CD4-positive, alpha-beta T cell (primary cell): ENCODE measurements at regions of chr1 and their contacts with region 1.

Region 1: GRCh38 chr1:161749509-161750407 is at the start of gene DUSP12:
- DNase-seq: peak; percentile 75 to 94 (median 82)
- ATAC-seq: peak; percentile 96
- H3K4me3 ChIP-seq: peak within 1 kb of the TSS; percentile 95
- H3K4me3 Mint-ChIP-seq: peak within 1 kb of the TSS; percentile 99
- H3K27ac ChIP-seq: peak within 1 kb of the TSS; percentile 70 to 73
- H3K27ac Mint-ChIP-seq: peak within 1 kb of the TSS; percentile 91
- H3K4me1 ChIP-seq: peaks cover 20% of the 10 kb centered on the region
- H3K4me1 Mint-ChIP-seq: peaks cover 43% of the 10 kb centered on the region
- H3K27me3 ChIP-seq: no peaks in the 10 kb centered on the region
- H3K27me3 Mint-ChIP-seq: peaks cover 8% of the 10 kb centered on the region
- CTCF ChIP-seq: no peak
- total RNA-seq, gene DUSP12: 20.3 to 23.0 TPM

Region 2: GRCh38 chr1:161389691-161390558 is 359.8 kb before region 1 on chr1:
- CTCF ChIA-PET with region 1: no interaction called
- POLR2A ChIA-PET with region 1: interaction called, 3 read pairs
- intact Hi-C with region 1: loop called in 1 of 2 experiments (anchors 5 kb)
- DNase-seq: peak; percentile 90 to 98 (median 96)
- ATAC-seq: peak; percentile 86
- H3K4me3 ChIP-seq: peak overlapping the region; percentile 92
- H3K4me3 Mint-ChIP-seq: peak overlapping the region; percentile 92
- H3K27ac ChIP-seq: peak overlapping the region; percentile 70 to 90
- H3K27ac Mint-ChIP-seq: peak overlapping the region; percentile 97
- H3K4me1 ChIP-seq: peaks cover 25% of the 10 kb centered on the region
- H3K4me1 Mint-ChIP-seq: peaks cover 45% of the 10 kb centered on the region
- H3K27me3 ChIP-seq: no peaks in the 10 kb centered on the region
- H3K27me3 Mint-ChIP-seq: no peaks in the 10 kb centered on the region
- CTCF ChIP-seq: no peak

Region 3: GRCh38 chr1:161531986-161532643 is 217.6 kb before region 1 on chr1:
- CTCF ChIA-PET with region 1: no interaction called
- POLR2A ChIA-PET with region 1: interaction called, 17 read pairs
- intact Hi-C with region 1: no loop called
- DNase-seq: no peak
- ATAC-seq: no peak
- H3K4me3 ChIP-seq: no peak overlapping the region
- H3K4me3 Mint-ChIP-seq: peak overlapping the region; percentile 69
- H3K27ac ChIP-seq: no peak overlapping the region
- H3K27ac Mint-ChIP-seq: peak overlapping the region; percentile 100
- H3K4me1 ChIP-seq: peaks cover 8% of the 10 kb centered on the region
- H3K4me1 Mint-ChIP-seq: peaks cover 25% of the 10 kb centered on the region
- H3K27me3 ChIP-seq: no peaks in the 10 kb centered on the region
- H3K27me3 Mint-ChIP-seq: peaks cover 16% of the 10 kb centered on the region
- CTCF ChIP-seq: no peak

Region 4: DNA sequence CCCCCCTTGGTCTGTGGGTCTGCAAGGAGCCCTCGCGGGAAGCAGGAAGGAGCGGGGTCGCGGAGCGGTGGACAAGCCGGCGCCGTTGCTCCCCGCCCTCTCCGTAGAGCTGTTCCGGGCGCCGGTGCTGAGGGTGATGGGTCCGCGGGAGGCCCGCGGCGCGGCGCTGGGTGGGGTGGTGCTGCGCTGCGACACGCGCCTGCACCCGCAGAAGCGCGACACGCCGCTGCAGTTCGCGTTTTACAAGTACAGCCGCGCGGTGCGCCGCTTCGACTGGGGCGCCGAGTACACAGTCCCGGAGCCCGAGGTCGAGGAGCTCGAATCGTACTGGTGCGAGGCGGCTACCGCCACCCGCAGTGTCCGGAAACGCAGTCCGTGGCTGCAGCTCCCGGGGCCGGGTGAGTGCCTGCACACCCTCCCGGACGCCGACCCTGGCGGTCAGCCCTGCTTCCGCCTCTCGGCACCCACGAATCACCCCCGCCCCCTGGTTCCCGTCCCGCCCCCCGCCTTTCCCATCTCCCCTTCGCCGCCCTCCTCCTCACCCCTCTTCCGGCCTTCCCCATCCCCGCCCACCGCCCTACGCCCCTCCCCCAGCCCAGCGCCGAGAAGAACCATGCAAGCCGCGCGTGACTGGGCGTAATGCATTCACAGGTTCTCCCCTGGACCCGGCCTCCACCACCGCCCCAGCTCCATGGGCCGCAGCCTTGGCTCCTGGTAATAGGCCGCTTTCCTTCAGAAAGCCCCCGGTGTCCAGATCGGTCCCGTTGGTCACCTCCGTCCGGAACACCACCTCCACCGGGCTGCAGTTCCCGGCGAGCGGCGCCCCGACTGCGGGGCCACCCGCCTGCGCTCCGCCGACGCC is 22.9 kb before region 1 on chr1:
- CTCF ChIA-PET with region 1: no interaction called
- POLR2A ChIA-PET with region 1: interaction called, 39 read pairs
- intact Hi-C with region 1: no loop called
- DNase-seq: peak; percentile 47 to 88 (median 67)
- ATAC-seq: peak; percentile 61
- H3K4me3 ChIP-seq: peak overlapping the region; percentile 80
- H3K4me3 Mint-ChIP-seq: peak overlapping the region; percentile 94
- H3K27ac ChIP-seq: peak overlapping the region; percentile 40 to 60
- H3K27ac Mint-ChIP-seq: peak overlapping the region; percentile 79
- H3K4me1 ChIP-seq: peaks cover 33% of the 10 kb centered on the region
- H3K4me1 Mint-ChIP-seq: peaks cover 37% of the 10 kb centered on the region
- H3K27me3 ChIP-seq: peaks cover 0 to 3% of the 10 kb centered on the region in 2 experiments
- H3K27me3 Mint-ChIP-seq: peaks cover 22% of the 10 kb centered on the region
- CTCF ChIP-seq: no peak

Region 5: DNA sequence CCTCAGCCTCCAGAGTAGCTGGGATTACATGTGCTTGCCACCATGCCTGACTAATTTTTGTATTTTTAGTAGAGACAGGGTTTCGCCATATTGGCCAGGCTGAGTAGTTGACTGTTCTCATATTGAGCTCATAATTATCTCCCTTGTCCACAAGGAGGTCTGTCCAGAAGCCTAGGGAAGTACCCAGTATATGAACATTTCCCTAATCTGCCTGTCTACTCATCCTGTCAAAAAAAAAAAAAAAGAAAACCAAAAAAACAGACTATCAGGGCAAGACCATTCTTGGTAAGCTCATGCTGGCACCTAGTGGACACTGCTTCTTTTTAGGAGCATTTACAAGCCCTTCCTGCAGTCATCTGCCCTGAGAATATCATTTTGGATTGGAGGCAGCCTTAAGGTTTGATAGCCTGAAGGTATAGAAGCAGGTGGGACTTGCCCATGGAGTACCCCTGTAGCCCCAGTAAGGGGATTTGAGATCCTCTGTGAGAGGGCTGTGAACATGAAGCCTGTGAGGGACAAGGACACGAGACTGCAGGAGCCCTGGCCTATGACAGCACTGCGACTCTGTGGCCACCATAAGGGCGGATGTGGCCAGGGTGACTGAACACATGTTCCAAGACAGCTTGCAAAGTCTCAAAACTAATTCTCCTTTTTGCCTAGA is 11.0 kb before region 1 on chr1:
- CTCF ChIA-PET with region 1: interaction called, 4 read pairs
- POLR2A ChIA-PET with region 1: interaction called, 15 read pairs
- intact Hi-C with region 1: no loop called
- DNase-seq: peak in 10 of 14 experiments; percentile 11 to 85 (median 33)
- ATAC-seq: peak; percentile 68
- H3K4me3 ChIP-seq: no peak overlapping the region
- H3K4me3 Mint-ChIP-seq: no peak overlapping the region
- H3K27ac ChIP-seq: no peak overlapping the region
- H3K27ac Mint-ChIP-seq: no peak overlapping the region
- H3K4me1 ChIP-seq: peaks cover 19% of the 10 kb centered on the region
- H3K4me1 Mint-ChIP-seq: peaks cover 20% of the 10 kb centered on the region
- H3K27me3 ChIP-seq: no peaks in the 10 kb centered on the region
- H3K27me3 Mint-ChIP-seq: peaks cover 22% of the 10 kb centered on the region
- CTCF ChIP-seq: peak; percentile 51

Region 6: DNA sequence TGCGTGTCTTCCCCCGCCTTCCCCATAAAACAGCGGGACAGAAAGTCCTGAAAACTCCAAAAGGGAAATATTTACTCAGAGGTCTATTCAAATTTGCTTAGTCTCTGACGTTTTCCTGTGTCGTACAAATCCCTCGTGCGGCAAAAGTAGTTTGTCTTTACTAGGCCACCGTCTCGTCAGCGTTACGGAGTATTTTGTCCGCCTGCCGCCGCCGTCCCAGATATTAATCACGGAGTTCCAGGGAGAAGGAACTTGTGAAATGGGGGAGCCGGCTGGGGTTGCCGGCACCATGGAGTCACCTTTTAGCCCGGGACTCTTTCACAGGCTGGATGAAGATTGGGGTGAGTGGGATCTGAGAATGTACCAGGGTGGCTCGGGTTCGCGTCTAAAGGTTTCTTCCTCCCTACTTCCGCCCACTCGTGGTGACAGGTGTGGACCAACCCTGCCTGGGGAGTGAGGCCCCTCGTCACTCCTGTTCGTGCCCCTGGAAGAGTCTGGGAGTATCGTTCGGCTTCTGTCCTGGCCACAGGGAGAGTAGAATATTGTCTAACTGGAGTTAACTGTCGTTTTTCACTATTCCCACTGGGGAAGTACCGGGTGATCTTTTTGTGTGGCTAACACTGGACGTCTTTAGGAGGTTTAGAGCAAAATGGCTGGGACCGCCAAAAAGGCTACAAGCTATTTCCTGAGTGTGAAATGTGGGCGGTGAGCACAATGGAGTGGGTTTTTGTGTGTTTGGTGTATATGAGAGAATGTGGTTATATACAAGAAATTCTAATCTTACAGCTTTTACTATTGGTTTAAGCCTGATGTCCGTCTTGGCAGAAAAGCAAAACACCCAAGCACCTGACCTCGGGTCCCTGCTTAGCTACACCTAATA is 16.6 kb after region 1 on chr1 and contains the start of gene ATF6:
- CTCF ChIA-PET with region 1: interaction called, 8 read pairs
- POLR2A ChIA-PET with region 1: interaction called, 11 read pairs
- intact Hi-C with region 1: loop called in 1 of 2 experiments (anchors 1 kb)
- DNase-seq: peak; percentile 66 to 90 (median 74)
- ATAC-seq: peak; percentile 69
- H3K4me3 ChIP-seq: peak within 1 kb of the TSS; percentile 70
- H3K4me3 Mint-ChIP-seq: peak within 1 kb of the TSS; percentile 99
- H3K27ac ChIP-seq: peak within 1 kb of the TSS; percentile 76 to 86
- H3K27ac Mint-ChIP-seq: no peak within 1 kb of the TSS
- H3K4me1 ChIP-seq: peaks cover 29% of the 10 kb centered on the region
- H3K4me1 Mint-ChIP-seq: peaks cover 40% of the 10 kb centered on the region
- H3K27me3 ChIP-seq: no peaks in the 10 kb centered on the region
- H3K27me3 Mint-ChIP-seq: no peaks in the 10 kb centered on the region
- CTCF ChIP-seq: no peak
- total RNA-seq, gene ATF6: 16.2 to 17.1 TPM

Region 7: GRCh38 chr1:162136760-162137159 is 387.0 kb after region 1 on chr1:
- CTCF ChIA-PET with region 1: no interaction called
- POLR2A ChIA-PET with region 1: no interaction called
- intact Hi-C with region 1: no loop called
- DNase-seq: no peak
- ATAC-seq: no peak
- H3K4me3 ChIP-seq: no peak overlapping the region
- H3K4me3 Mint-ChIP-seq: no peak overlapping the region
- H3K27ac ChIP-seq: no peak overlapping the region
- H3K27ac Mint-ChIP-seq: no peak overlapping the region
- H3K4me1 ChIP-seq: no peaks in the 10 kb centered on the region
- H3K4me1 Mint-ChIP-seq: no peaks in the 10 kb centered on the region
- H3K27me3 ChIP-seq: peaks cover 3 to 7% of the 10 kb centered on the region in 2 experiments
- H3K27me3 Mint-ChIP-seq: peaks cover 48% of the 10 kb centered on the region
- CTCF ChIP-seq: no peak